Activated T-helper 2 cell treated with anti-CD3 and anti-CD28 coated beads, Interferon-gamma antibody, Interleukin-2, Interleukin-4, amounts not matched to agents 10 μg/mL and 5 μg/mL and 100 μg/mL, durations not matched to agents 14 hours and 24 hours and 36 hours (primary cell): ENCODE measurements at regions of chr6 and their contacts with region 1.

Region 1: DNA sequence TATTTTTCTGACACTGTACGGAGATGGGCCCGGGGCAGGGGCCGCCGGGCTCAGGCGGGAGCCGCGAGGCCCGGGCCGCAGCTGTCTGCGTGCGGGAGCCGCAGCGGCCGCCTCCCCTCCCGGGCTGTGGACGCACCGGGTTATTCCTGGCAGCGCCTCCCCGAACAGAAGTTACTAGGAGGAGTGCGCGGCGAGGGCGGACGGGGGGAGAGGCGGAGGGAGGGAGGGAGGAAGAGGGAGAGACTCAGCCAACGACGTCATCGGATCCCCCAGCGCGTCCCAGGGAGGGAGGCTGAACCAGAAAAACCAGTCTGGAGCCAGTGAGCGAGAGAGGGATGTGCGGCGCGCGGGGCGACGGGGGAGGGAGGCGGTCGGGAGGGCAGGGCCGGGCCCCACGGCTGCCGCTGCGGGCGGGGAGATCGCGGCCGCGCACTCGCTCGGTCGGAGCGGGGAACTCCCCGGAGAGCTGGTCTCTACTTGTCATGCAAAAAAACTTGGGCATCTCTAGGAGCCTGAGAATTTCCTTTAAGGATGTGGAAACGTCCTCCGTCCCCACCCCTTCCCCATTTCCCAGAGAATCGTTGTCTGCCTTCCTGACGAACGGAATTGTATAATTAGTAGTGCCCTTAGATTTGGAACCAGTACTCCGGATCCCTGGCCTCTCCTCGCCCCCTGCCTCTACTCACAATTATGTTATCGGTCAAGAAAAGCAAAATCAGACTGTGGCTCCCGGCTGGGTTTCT is 1.4 kb upstream of the HIVEP2 start:
- DNase-seq: peak; percentile 74
- H3K4me3 Mint-ChIP-seq: peak overlapping the region; percentile 87
- H3K27ac Mint-ChIP-seq: peak overlapping the region; percentile 88
- H3K4me1 Mint-ChIP-seq: peaks cover 40% of the 10 kb centered on the region
- H3K27me3 Mint-ChIP-seq: peaks cover 15% of the 10 kb centered on the region

Region 2: DNA sequence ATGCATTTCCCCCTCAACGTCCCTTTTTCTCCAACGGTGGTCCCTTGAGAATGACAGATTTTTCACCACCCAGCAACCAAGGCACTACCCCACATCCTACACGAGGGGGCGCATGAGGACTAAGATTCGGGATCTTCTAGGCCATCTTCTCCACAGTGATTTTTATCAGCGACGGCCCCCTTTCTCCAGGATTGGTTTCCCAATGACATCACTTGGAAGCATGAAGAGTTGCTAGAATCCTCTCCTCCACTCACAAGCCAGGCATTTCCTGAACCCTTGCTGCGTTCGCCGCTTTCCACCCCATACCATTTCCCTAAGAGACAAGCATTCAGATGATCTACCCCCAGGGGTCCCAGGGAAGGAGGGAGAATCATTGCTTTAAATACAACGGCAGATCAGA is 253.4 kb before region 1 on chr6:
- intact Hi-C with region 1: loop called (anchors 5 kb)
- DNase-seq: peak; percentile 28
- H3K4me3 Mint-ChIP-seq: no peak overlapping the region
- H3K27ac Mint-ChIP-seq: no peak overlapping the region
- H3K4me1 Mint-ChIP-seq: peaks cover 16% of the 10 kb centered on the region
- H3K27me3 Mint-ChIP-seq: no peaks in the 10 kb centered on the region

Region 3: DNA sequence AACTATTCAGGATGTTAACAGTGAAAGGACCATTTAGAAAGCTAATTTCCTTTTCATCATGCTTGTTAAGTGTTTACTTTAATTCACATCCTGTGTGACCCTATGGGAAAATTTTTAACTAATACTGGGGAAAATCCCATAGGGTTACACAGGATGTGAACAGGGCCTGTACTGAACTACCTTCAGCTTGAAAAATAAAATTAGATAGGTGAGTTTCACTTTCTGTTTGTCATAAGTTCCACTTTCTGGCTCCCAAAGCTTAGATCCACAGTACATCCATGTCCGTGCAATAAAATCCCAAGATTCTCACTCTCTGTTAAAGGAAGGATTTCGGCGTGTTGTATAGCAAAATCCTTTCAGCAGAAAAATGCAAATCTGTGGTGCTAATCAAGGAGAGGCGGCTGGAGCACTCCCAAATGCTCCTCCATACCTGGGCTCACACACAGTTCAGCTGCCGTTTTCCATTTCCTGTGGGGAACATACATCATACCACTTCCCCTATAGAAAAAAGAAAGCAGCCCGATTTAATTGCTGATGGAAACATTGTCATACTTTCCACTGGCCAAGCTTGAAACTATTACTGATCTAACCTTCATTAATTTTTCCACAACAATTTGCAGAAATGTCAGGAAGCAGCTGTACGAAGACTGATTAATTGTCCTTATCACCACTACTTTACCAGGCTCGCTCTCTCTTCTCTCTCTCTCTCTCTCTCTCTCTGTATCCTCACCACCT is 126.6 kb before region 1 on chr6:
- intact Hi-C with region 1: loop called (anchors 1 kb)
- DNase-seq: peak; percentile 55
- H3K4me3 Mint-ChIP-seq: peak overlapping the region; percentile 76
- H3K27ac Mint-ChIP-seq: peak overlapping the region; percentile 91
- H3K4me1 Mint-ChIP-seq: peaks cover 57% of the 10 kb centered on the region
- H3K27me3 Mint-ChIP-seq: no peaks in the 10 kb centered on the region

Region 4: DNA sequence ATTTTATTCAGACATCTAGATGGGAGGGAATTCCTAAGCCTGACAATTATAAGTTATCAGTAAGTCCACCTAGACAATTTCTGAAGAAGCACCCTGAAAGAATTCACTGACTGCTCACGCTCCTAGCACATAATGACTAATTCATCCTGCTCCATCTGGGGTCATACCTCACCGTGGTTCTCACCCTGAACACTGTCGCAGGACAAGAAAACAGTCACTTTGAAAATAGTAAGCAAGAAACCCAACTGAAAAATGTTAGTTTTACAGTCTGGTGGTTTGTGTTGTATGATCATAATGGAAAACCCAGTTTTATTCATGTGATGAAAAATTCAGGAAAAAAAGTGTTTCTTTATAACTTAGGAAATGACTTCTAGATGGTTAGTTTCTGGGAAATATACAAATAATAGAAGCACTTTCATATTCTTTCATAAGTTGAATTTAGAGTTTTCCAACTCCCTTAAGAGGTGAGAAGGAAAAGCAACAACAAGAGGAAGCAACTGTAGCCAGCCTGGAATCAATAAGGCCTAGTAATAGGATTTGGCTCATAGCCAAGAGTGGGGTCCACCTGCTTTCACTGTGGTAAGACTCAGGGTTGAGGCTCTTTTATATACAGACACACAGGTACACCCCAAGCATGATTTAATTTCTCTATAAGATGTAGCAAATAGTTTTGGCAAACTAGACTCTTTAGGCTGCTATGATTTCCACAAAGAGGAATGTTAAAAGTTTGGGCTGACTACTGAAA is 95.5 kb before region 1 on chr6:
- intact Hi-C with region 1: loop called (anchors 2 kb)
- DNase-seq: no peak
- H3K4me3 Mint-ChIP-seq: peak overlapping the region; percentile 21
- H3K27ac Mint-ChIP-seq: peak overlapping the region; percentile 83
- H3K4me1 Mint-ChIP-seq: peaks cover 90% of the 10 kb centered on the region
- H3K27me3 Mint-ChIP-seq: no peaks in the 10 kb centered on the region

Region 5: DNA sequence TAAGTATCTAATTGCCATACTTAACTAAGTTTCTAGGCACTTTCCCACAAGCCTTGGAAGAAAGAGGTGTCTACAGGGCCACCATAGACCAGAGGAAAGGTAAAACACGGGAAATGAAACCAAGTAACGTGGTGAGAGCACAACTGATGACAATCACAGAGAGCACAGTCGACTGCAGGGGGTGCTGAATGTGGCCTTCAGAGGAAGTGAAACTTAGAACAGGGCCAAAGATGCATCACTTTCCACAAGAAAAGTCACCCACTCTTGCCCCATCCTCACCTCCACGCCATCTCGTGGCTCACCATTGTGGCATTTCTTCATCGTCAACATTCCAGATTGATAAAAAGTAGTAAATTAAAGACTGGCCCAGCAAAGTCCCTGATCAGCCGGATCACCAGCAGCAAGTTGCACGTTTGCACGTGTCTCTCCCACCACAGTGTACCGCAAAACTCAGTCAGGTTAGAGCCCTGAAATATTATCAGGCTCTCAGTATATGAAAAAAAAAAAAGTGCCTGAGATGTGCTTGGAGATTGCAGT is 32.8 kb before region 1 on chr6:
- intact Hi-C with region 1: loop called (anchors 1 kb)
- DNase-seq: peak; percentile 75
- H3K4me3 Mint-ChIP-seq: peak overlapping the region; percentile 48
- H3K27ac Mint-ChIP-seq: peak overlapping the region; percentile 87
- H3K4me1 Mint-ChIP-seq: peaks cover 67% of the 10 kb centered on the region
- H3K27me3 Mint-ChIP-seq: no peaks in the 10 kb centered on the region

Region 6: DNA sequence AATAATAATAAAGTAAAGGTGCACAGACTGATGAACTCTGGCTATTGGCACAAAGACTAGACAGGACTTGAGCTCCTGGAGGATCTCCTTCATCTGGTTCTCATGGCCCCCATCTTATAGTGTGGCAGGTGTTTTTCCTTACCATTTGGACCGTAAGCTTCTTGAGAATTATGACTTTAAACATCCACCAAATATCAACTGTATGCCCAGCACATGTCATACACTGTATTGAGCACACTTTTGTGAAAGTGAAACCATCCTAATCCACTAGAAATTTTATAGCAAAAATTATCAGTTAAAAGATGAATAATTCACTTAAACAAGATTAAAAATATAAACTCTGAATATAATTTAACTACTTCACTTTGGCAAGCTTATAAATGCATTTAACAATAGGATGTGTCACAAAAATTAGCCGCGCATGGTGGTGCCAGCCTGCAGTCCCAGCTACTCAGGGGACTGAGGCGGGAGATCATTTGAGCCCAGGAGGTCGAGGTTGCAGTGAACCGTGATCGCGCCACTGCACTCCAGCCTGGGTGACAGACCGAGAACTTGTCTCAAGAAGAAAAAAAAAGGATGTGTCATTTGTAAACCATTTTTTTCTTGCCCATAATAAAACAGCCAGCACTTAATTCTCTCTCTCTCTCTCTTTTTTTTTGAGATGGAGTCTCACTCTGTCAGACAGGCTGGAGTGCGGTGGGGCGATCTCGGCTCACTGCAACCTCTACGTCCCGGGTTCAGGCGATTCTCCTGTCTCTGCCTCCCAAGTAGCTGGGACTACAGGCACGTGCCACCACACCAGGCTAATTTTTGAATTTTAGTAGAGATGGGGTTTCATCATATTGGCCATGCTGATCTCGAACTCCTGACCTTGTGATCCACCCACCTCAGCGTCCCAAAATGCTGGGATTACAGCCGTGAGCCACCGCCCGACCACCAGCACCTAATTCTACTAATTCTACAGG is 10.5 kb before region 1 on chr6:
- intact Hi-C with region 1: loop called (anchors 1 kb)
- DNase-seq: no peak
- H3K4me3 Mint-ChIP-seq: peak overlapping the region; percentile 51
- H3K27ac Mint-ChIP-seq: peak overlapping the region; percentile 80
- H3K4me1 Mint-ChIP-seq: peaks cover 66% of the 10 kb centered on the region
- H3K27me3 Mint-ChIP-seq: no peaks in the 10 kb centered on the region

Region 7: DNA sequence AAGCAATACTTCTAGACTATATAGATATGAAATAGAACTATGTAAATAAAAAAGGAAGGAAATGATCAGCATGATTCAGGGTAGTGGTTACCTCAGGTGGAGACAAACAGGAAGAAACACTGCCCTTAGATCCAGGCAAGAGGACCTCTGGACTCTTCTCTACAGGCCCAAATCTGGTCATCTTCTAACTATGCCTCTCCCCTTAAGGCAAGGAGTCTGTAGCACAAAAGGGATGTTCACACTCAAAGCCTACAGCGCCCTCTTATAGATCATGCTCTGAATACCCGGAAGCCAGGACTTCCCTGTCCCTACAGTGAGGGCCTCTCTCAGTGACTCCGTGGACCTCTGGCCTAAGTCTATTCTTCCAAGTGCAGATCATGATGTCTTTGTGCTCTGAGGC is 29.0 kb after region 1 on chr6:
- intact Hi-C with region 1: no loop called
- DNase-seq: no peak
- H3K4me3 Mint-ChIP-seq: no peak overlapping the region
- H3K27ac Mint-ChIP-seq: no peak overlapping the region
- H3K4me1 Mint-ChIP-seq: no peaks in the 10 kb centered on the region
- H3K27me3 Mint-ChIP-seq: no peaks in the 10 kb centered on the region

Region 8: DNA sequence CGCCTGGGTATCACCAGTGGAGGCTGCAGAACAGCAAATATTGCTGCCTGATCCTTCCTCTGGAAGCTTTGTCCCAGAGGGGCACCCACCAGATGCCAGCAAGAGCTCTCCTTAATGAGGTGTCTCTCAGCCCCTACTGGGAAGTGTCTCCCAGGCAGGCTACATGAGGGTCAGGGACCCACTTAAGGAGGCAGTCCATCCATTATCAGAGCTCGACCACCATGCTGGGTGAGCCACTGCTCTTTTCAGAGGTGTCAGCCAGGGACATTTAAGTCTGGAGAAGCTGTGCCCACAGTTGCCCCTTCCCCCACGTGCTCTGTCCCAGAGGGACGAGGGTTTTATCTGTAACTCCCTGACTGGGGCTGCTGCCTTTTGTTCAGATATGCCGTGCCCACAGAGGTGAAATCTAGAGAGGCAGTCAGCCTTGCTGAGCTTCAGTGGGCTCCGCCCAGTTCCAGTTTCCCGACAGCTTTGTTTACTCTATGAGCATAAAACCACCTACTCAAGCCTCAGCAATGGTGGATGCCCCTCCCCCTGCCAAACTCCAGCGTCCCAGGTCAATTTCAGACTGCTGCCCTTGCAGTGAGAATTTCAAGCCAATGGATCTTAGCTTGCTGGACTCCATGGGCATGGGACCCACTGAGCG is 88.5 kb after region 1 on chr6:
- intact Hi-C with region 1: no loop called
- DNase-seq: no peak
- H3K4me3 Mint-ChIP-seq: no peak overlapping the region
- H3K27ac Mint-ChIP-seq: no peak overlapping the region
- H3K4me1 Mint-ChIP-seq: peaks cover 5% of the 10 kb centered on the region
- H3K27me3 Mint-ChIP-seq: peaks cover 15% of the 10 kb centered on the region

Region 9: DNA sequence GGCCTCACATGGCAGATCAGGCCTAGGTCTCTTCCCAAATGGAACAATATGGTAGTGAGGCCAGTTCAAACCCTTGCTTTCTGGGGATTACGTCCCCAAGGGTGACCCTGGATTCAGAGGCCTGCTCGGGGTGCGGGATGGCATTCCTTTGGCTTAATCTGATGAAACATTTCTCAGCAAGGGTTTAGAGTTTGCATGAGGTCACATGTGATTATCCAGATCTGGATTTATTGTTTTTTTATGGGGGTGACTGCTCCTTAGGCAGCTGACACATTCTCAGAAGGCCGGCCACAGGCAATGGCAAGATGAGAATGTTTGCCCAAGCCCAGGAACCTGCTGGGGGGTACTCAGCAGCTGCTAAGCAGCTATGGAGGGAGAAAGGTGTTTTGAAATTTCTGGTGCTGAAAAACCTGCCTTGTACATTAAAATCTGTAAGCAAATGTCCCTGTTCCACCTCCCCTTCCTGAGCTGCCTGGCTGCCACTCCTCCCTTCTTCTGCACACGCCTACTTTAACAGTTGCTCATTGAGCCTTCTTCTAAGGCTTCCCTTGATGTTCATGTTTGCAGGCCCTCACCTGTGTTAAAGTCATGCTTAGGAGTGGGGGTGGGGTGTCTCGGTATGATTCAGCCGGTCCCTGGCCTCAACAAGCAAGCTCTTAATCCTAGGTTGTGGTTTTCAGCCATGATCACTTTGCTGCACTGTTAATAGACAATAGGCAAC is 603.0 kb after region 1 on chr6:
- intact Hi-C with region 1: loop called (anchors 10 kb)
- DNase-seq: peak; percentile 30
- H3K4me3 Mint-ChIP-seq: no peak overlapping the region
- H3K27ac Mint-ChIP-seq: peak overlapping the region; percentile 60
- H3K4me1 Mint-ChIP-seq: peaks cover 87% of the 10 kb centered on the region
- H3K27me3 Mint-ChIP-seq: no peaks in the 10 kb centered on the region